Heart right ventricle (tissue), 16 donors: ENCODE measurements at regions of chr1 and their contacts with region 1.

Region 1: DNA sequence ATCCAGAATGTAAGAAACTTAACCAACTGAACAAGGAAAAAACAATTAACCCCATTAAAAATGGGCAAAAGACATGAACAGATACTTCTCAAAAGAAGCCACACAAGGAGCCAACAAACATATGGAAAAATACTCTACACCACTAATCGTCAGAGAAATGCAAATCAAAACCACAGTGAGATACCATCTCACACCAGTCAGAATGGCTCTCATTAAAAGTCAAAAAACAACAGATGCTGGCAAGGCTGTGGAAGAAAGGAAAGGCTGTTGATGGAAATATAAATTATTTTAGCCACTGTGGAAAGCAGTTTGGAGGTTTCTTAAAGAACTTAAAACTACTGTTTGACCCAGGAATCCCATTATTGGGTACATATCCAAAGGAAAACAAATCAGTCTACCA is 51.2 kb downstream of the RGS4 start:
- DNase-seq: no peak
- ATAC-seq: no peak
- H3K4me3 ChIP-seq: no peak overlapping the region
- H3K27ac ChIP-seq: no peak overlapping the region
- H3K4me1 ChIP-seq: no peaks in the 10 kb centered on the region
- H3K27me3 ChIP-seq: no peaks in the 10 kb centered on the region
- CTCF ChIP-seq: no peak

Region 2: GRCh38 chr1:162538815-162539431 is 581.4 kb before region 1 on chr1:
- intact Hi-C with region 1: no loop called
- DNase-seq: no peak
- ATAC-seq: no peak
- H3K4me3 ChIP-seq: no peak overlapping the region
- H3K27ac ChIP-seq: peak overlapping the region in 1 of 10 donors; percentile 26
- H3K4me1 ChIP-seq: peaks cover 0 to 11% (median 8%) of the 10 kb centered on the region in 9 donors
- H3K27me3 ChIP-seq: no peaks in the 10 kb centered on the region
- CTCF ChIP-seq: no peak

Region 3: GRCh38 chr1:162835157-162835899 is 285.0 kb before region 1 on chr1:
- intact Hi-C with region 1: no loop called
- DNase-seq: no peak
- ATAC-seq: no peak
- H3K4me3 ChIP-seq: no peak overlapping the region
- H3K27ac ChIP-seq: no peak overlapping the region
- H3K4me1 ChIP-seq: no peaks in the 10 kb centered on the region
- H3K27me3 ChIP-seq: peaks cover 0 to 7% (median 0%) of the 10 kb centered on the region in 7 donors
- CTCF ChIP-seq: no peak

Region 4: DNA sequence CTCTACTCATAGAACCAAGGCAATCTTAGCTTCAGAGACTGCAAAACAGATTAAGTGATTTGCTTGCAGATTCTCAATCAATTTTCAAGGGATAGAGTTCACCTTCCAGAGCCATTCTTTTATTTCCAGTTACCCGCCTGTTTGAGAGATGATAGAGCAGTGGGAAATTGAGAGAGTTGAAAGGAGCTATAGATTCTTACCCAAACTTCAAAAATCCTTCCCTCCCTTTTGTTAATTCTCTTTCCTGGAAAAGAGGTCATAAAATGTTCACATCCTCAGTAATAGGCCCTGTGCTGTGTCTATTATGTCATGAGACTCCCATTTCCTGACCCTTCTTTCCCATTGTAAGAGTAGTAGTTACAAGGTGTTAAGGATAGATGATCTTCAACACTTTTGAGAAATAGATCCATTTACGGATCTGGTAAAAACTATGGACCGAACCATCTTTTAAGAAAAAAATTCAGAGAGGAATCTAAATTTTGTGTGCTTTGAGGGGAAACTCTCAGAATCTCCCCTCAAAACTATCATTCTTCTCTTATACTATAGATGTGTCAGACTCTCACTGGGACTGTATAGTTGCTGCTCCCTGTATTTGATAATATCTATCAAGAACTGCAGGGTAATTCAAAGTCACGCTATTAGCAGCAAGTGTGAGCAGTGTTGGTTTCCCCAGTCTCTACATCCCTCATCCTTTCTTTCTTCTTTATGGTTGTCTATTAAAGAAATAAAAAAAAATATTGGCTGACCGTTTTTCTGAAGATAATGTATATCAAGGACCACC is 43.2 kb before region 1 on chr1:
- intact Hi-C with region 1: loop called in 2 of 10 experiments (anchors 5 to 10 kb)
- DNase-seq: no peak
- ATAC-seq: no peak
- H3K4me3 ChIP-seq: no peak overlapping the region
- H3K27ac ChIP-seq: no peak overlapping the region
- H3K4me1 ChIP-seq: no peaks in the 10 kb centered on the region
- H3K27me3 ChIP-seq: no peaks in the 10 kb centered on the region
- CTCF ChIP-seq: no peak

Region 5: GRCh38 chr1:163155606-163156005 is 35.2 kb after region 1 on chr1:
- intact Hi-C with region 1: no loop called
- DNase-seq: no peak
- ATAC-seq: no peak
- H3K4me3 ChIP-seq: no peak overlapping the region
- H3K27ac ChIP-seq: no peak overlapping the region
- H3K4me1 ChIP-seq: no peaks in the 10 kb centered on the region
- H3K27me3 ChIP-seq: no peaks in the 10 kb centered on the region
- CTCF ChIP-seq: no peak

Region 6: DNA sequence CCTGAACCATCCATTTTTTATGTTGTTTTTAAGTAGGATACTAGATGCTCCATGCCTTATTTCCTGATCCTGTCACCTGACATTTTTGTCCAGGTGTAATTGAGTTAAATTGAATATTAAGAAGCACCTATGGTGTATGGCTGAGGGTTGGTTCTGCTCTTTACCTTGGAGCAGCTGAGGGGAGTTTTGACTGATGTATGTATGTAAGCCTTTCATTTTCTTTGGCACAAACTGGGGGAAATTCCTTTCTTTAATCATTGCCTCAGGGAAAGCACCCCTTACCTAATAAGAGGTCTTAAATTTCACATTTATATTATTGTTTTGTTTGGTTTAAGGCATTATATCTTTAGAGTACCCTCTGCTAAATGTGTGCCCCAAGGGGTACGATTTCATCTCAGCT is 143.4 kb after region 1 on chr1:
- intact Hi-C with region 1: no loop called
- DNase-seq: no peak
- ATAC-seq: no peak
- H3K4me3 ChIP-seq: no peak overlapping the region
- H3K27ac ChIP-seq: no peak overlapping the region
- H3K4me1 ChIP-seq: peaks cover 0 to 1% (median 0%) of the 10 kb centered on the region in 9 donors
- H3K27me3 ChIP-seq: no peaks in the 10 kb centered on the region
- CTCF ChIP-seq: no peak